CD14-positive monocyte (primary cell): ENCODE measurements at regions of chr11 and their contacts with region 1.

Region 1: DNA sequence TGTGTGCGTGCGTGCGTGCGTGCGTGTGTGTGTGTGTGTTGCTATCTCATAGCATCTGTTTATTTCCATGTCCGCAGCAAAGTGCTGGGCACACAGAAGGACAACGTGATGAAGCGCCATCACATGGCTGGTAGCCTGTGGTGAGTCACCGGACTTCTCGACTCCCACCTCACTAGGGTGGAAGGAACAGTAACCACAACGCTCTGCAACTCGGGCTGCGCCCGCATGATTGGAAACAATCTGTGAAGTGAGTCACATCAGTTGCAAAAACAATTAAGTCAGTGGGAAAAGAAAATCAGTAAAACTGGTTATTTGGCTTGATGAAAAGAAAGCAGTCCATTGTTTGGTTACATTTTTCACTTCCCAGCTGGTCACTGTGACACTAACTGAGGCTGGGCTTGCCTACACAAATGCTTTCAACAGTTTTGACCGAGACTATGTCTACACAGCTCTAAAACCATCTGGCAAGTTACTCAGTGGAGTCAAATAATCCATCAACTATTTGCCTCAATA is 437.3 kb upstream of the CADM1 start:
- DNase-seq: peak; percentile 68 to 95 (median 91)
- H3K4me3 ChIP-seq: no peak overlapping the region
- H3K4me3 Mint-ChIP-seq: peak overlapping the region in 1 of 2 donors; percentile 9
- H3K27ac ChIP-seq: peak overlapping the region in 1 of 2 donors; percentile 50
- H3K27ac Mint-ChIP-seq: peak overlapping the region in 5 of 7 donors; percentile 58 to 91 (median 76)
- H3K4me1 ChIP-seq: peaks cover 15 to 20% of the 10 kb centered on the region in 2 donors
- H3K4me1 Mint-ChIP-seq: peaks cover 12% of the 10 kb centered on the region
- H3K27me3 ChIP-seq: peaks cover 20 to 22% of the 10 kb centered on the region in 2 donors
- H3K27me3 Mint-ChIP-seq: peaks cover 12 to 35% (median 20%) of the 10 kb centered on the region in 3 donors
- CTCF ChIP-seq: no peak

Region 2: DNA sequence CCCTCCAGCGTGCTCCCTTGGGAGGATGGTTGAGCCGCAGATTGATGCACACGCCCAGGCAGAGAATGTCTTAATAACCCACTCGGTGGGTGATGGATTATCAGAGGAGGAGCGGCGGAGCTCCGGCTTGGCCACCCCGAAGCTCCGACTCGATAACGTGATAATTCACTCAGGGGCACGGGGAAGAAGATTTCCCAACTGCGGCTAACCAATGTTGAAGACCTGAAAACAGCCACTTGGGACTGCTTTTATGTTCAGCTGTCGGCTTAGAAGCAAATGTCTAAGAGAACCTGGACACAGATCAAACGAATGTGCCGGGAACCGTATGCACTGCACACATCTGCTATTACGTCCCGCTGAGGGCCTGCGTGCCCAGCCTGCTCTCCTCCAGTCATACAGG is 230.6 kb before region 1 on chr11:
- intact Hi-C with region 1: loop called in 1 of 2 experiments (anchors 5 kb)
- DNase-seq: no peak
- H3K4me3 ChIP-seq: no peak overlapping the region
- H3K4me3 Mint-ChIP-seq: peak overlapping the region in 1 of 2 donors; percentile 55
- H3K27ac ChIP-seq: no peak overlapping the region
- H3K27ac Mint-ChIP-seq: peak overlapping the region in 3 of 7 donors; percentile 45 to 47 (median 46)
- H3K4me1 ChIP-seq: peaks cover 59 to 64% of the 10 kb centered on the region in 2 donors
- H3K4me1 Mint-ChIP-seq: peaks cover 59% of the 10 kb centered on the region
- H3K27me3 ChIP-seq: peaks cover 0 to 15% of the 10 kb centered on the region in 2 donors
- H3K27me3 Mint-ChIP-seq: peaks cover 16 to 29% (median 24%) of the 10 kb centered on the region in 3 donors
- CTCF ChIP-seq: no peak

Region 3: GRCh38 chr11:115919341-115920091 is 22.0 kb before region 1 on chr11:
- intact Hi-C with region 1: loop called in 1 of 2 experiments (anchors 1 kb)
- DNase-seq: peak; percentile 16 to 87 (median 53)
- H3K4me3 ChIP-seq: no peak overlapping the region
- H3K4me3 Mint-ChIP-seq: peak overlapping the region in 1 of 2 donors; percentile 44
- H3K27ac ChIP-seq: no peak overlapping the region
- H3K27ac Mint-ChIP-seq: peak overlapping the region in 2 of 7 donors; percentile 11 to 35
- H3K4me1 ChIP-seq: peaks cover 7 to 10% of the 10 kb centered on the region in 2 donors
- H3K4me1 Mint-ChIP-seq: peaks cover 9% of the 10 kb centered on the region
- H3K27me3 ChIP-seq: peaks cover 3% of the 10 kb centered on the region in 2 donors
- H3K27me3 Mint-ChIP-seq: peaks cover 27 to 33% (median 31%) of the 10 kb centered on the region in 3 donors
- CTCF ChIP-seq: no peak